ENCODE measurements at regions of chr11 and their contacts with region 1.

Region 1: DNA sequence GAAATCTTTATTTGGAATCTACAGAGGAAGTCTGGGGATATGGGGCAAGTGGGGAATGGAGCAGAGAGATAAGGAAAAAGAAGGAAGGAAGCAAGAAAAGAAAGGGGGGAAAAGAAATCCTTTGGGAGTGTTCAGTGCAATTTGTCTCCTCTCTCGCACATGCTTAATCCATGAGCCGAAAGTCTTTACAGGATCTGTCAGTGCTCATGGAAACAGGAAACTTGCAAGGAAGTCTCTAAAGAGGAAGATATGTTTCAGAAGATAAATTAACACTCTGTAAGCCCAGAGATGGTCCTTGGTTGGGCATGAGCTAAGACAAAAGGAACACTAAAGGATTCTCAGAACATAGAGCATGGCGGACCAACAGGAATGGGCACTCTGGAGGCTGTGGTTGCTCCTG is 47.9 kb upstream of the FLI1 start:
- DNase-seq: no peak
- ATAC-seq: no peak
- H3K4me3 ChIP-seq: no peak overlapping the region
- H3K4me3 Mint-ChIP-seq: no peak overlapping the region
- H3K27ac ChIP-seq: no peak overlapping the region
- H3K27ac Mint-ChIP-seq: no peak overlapping the region
- H3K4me1 ChIP-seq: no peaks in the 10 kb centered on the region
- H3K4me1 Mint-ChIP-seq: peaks cover 0 to 8% (median 5%) of the 10 kb centered on the region in 7 donors
- H3K27me3 ChIP-seq: no peaks in the 10 kb centered on the region
- H3K27me3 Mint-ChIP-seq: peaks cover 0 to 30% (median 0%) of the 10 kb centered on the region in 5 donors

Region 2: DNA sequence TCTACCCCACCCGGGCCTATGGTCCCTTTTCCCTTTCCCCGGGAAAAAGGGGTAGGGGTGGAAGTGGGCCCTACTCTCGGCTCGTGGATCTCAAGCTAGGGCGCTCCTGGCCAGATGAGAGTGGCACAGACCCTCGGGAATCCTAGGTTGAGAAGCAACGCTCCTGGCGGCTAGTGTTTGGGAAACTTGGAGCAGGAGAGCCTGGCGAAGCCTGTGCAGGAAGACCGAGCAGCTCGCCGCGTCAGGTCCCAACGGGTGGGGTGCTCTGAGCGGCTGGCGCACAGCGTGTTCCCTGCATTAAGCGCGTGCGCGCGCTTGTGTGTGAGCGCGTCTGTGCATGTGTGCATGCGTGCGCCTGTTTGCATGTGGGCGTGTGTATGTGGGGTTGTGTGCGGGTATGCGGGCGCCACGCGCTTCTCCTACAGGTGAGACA is 40.8 kb after region 1 on chr11:
- CTCF ChIA-PET with region 1: no interaction called
- POLR2A ChIA-PET with region 1: no interaction called
- intact Hi-C with region 1: loop called in 1 of 2 experiments (anchors 5 kb)
- DNase-seq: peak; percentile 36 to 73 (median 52)
- ATAC-seq: peak; percentile 80
- H3K4me3 ChIP-seq: peak overlapping the region; percentile 73
- H3K4me3 Mint-ChIP-seq: peak overlapping the region; percentile 78 to 94 (median 86)
- H3K27ac ChIP-seq: no peak overlapping the region
- H3K27ac Mint-ChIP-seq: peak overlapping the region in 2 of 9 donors; percentile 68 to 87
- H3K4me1 ChIP-seq: peaks cover 13 to 32% of the 10 kb centered on the region in 2 donors
- H3K4me1 Mint-ChIP-seq: peaks cover 35 to 59% (median 46%) of the 10 kb centered on the region in 7 donors
- H3K27me3 ChIP-seq: peaks cover 4 to 13% of the 10 kb centered on the region in 2 donors
- H3K27me3 Mint-ChIP-seq: peaks cover 17 to 83% (median 34%) of the 10 kb centered on the region in 5 donors

Region 3: DNA sequence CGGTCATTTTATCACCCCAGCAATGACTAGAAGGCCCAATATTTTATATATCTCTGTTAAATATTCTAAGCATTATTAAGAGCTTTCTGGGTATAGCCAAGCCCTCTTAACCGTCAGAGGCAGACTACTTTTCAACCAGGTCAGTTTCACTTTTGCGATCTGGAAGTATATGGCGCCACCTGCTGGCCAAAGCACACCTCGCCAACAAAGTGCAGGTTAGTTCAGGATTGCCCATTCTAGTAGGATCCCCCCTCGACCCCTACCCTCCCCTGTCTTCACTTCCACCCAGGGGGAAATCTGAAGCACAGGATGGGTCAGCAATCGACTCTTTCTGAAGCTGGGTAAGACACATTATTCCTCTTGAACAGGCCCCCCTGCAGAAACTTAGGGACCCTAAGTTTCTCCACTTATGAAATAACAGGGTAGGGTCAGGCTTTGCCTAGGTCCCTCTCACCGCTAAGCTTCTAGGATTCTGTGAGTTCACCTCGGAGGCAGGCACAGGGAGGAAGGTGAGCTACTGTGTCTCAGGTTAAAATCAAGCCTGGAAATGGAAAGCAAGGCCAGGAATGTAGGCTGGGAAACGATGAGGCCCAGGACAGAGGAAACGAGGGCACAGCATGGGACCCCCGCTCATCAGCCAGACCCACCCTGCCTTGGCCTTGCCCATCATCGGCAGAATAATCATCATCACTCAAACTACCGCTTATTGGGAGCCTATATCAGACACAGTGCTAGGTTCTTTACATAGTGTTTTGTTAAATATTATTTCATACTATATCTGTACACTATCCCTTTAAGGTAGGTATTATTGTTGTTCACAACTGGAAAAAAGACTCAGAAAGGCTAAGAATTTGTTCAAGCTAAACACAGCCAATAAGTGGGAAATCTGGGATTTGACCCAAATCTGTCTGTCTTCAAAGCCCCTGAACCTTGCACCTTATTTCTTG is 185.5 kb after region 1 on chr11:
- CTCF ChIA-PET with region 1: no interaction called
- POLR2A ChIA-PET with region 1: no interaction called
- intact Hi-C with region 1: no loop called
- DNase-seq: peak; percentile 68 to 85 (median 80)
- ATAC-seq: peak; percentile 90
- H3K4me3 ChIP-seq: peak overlapping the region; percentile 43
- H3K4me3 Mint-ChIP-seq: peak overlapping the region; percentile 61 to 87 (median 76)
- H3K27ac ChIP-seq: peak overlapping the region; percentile 67
- H3K27ac Mint-ChIP-seq: peak overlapping the region; percentile 58 to 98 (median 89)
- H3K4me1 ChIP-seq: peaks cover 11 to 15% of the 10 kb centered on the region in 2 donors
- H3K4me1 Mint-ChIP-seq: peaks cover 15 to 35% (median 24%) of the 10 kb centered on the region in 7 donors
- H3K27me3 ChIP-seq: no peaks in the 10 kb centered on the region
- H3K27me3 Mint-ChIP-seq: peaks cover 0 to 4% (median 0%) of the 10 kb centered on the region in 5 donors

Measured in naive thymus-derived CD4-positive, alpha-beta T cell (primary cell).